GM10248 (cell line): ENCODE measurements at regions of chr4 and their contacts with region 1.

Region 1: DNA sequence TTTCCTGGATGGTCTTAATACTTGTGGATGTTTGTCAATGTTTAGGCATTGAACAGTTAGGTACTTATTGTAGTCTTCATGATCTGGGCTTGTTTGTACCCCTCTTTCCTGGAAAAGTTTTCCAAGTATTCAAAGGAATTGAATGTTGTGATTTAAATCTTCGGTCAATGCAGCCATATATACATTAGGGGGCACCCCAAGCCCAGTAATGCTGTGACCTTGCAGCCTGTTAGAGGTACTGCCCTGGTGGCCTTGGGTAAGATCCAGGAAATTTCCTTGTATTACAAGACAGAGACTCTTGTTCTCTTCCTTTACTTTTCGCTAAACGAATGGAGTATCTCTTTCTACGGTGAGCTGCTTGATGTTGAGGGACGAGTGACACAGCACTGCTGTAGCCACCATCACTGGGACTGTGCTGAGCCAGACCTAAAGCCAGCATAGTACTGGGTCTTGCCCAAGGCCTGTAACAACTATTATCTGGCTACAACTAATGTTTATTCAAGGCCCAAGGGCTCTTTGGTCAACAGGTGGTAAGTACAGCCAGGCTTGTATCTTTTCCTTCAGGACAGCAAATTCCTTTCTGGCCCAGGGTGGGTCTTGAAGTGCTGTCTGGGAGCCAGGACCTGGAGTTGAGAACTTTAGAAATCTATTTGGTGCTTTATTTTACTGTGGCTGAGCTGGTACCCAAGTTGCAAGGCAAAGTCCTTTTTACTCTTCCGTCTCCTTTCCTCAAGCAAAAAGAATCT is 118.3 kb upstream of the ATOH1 start:
- DNase-seq: no peak
- CTCF ChIP-seq: peak; percentile 56

Region 2: DNA sequence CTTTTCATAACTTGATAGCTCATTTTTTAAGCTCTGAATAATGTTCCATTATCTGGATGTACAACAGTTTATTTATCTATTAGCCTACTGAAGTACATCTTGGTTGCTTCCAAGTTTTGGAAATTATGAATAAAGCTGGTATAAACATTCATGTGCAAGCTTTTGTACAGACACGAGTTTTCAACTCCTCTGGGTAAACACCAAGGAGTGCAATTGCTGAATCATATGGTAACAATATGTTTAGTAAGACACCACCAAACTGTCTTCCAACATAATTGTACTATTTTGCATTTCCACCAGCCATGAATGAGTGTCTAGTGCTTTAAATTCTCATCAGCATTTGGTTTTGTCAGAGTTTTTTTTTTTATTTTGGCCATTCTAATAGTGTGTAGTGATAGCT is 148.4 kb before region 1 on chr4:
- CTCF ChIA-PET with region 1: no interaction called
- POLR2A ChIA-PET with region 1: no interaction called
- DNase-seq: no peak
- CTCF ChIP-seq: no peak

Region 3: GRCh38 chr4:93748943-93749761 is 38.9 kb after region 1 on chr4:
- CTCF ChIA-PET with region 1: interaction called, 14 read pairs
- POLR2A ChIA-PET with region 1: no interaction called
- DNase-seq: peak; percentile 35
- CTCF ChIP-seq: no peak

Region 4: DNA sequence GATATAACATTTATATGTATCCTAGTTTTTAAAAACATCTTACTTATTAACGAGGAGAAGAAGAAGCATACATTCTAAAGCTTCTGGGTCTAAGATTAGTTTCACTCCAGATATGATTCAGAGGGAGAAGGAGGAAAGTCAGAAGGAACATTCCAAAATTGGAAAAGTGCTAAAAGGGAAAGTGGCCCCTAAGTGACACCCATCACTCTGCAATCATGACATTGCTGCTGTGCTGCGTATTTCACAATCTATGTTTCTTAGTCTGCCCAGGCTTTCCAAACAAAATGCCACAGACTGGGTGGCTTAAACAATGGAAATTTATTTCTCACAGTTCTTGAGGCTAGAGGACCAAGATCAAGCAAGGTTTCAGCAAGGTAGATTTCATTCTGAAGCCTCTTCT is 45.8 kb after region 1 on chr4:
- CTCF ChIA-PET with region 1: interaction called, 59 read pairs
- POLR2A ChIA-PET with region 1: no interaction called
- DNase-seq: no peak
- CTCF ChIP-seq: no peak

Region 5: DNA sequence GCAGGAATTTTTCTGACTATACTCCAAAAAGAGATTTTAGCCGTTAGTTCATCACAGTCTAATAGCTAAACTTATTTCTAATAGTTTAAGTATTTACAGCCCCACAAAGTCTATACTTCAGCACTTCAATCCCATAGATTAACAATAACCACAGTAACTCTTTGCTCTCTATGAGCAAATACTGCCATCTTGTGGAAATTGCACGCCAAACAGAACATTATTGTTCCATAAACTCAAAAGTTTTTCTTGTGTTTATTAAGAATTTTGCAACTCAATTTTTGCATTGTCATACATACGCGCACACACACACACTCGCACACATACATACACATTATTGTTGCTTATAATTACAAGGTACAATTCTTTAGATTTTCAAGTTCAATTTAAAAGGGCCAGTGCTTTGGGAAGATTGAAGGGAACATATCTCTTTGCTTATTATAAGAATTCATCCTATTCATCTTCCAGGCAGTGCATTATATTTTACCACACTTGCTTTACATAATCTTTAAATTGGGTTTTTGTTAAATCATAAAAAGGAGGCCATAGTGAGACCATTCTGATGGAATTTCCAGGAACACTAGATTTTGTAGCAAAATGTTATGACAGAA is 54.5 kb after region 1 on chr4:
- CTCF ChIA-PET with region 1: interaction called, 59 read pairs
- POLR2A ChIA-PET with region 1: no interaction called
- DNase-seq: peak; percentile 38
- CTCF ChIP-seq: peak; percentile 55

Region 6: GRCh38 chr4:93771640-93772411 is 61.6 kb after region 1 on chr4:
- CTCF ChIA-PET with region 1: interaction called, 18 read pairs
- POLR2A ChIA-PET with region 1: no interaction called
- DNase-seq: no peak
- CTCF ChIP-seq: no peak